Endothelial cell of umbilical vein (primary cell): ENCODE measurements at regions of chr9 and their contacts with region 1.

Region 1: GRCh38 chr9:3498691-3499090 is 27.1 kb downstream of the RFX3 start:
- DNase-seq: no peak
- H3K4me3 ChIP-seq: no peak overlapping the region
- H3K27ac ChIP-seq: no peak overlapping the region
- H3K4me1 ChIP-seq: peaks cover 22% of the 10 kb centered on the region
- H3K27me3 ChIP-seq: no peaks in the 10 kb centered on the region
- CTCF ChIP-seq: no peak
- POLR2A ChIP-seq: no peak

Region 2: GRCh38 chr9:3403315-3403714 is 95.4 kb before region 1 on chr9:
- CTCF ChIA-PET with region 1: no interaction called
- POLR2A ChIA-PET with region 1: no interaction called
- dilution Hi-C with region 1: no loop called
- intact Hi-C with region 1: no loop called
- DNase-seq: no peak
- H3K4me3 ChIP-seq: no peak overlapping the region
- H3K27ac ChIP-seq: no peak overlapping the region
- H3K4me1 ChIP-seq: no peaks in the 10 kb centered on the region
- H3K27me3 ChIP-seq: no peaks in the 10 kb centered on the region
- CTCF ChIP-seq: no peak
- POLR2A ChIP-seq: no peak

Region 3: GRCh38 chr9:3508521-3509291 is 10.0 kb after region 1 on chr9:
- CTCF ChIA-PET with region 1: interaction called, 12 read pairs
- POLR2A ChIA-PET with region 1: no interaction called
- dilution Hi-C with region 1: no loop called
- intact Hi-C with region 1: no loop called
- DNase-seq: peak; percentile 44
- H3K4me3 ChIP-seq: no peak overlapping the region
- H3K27ac ChIP-seq: no peak overlapping the region
- H3K4me1 ChIP-seq: peaks cover 6% of the 10 kb centered on the region
- H3K27me3 ChIP-seq: no peaks in the 10 kb centered on the region
- CTCF ChIP-seq: no peak
- POLR2A ChIP-seq: no peak

Region 4: DNA sequence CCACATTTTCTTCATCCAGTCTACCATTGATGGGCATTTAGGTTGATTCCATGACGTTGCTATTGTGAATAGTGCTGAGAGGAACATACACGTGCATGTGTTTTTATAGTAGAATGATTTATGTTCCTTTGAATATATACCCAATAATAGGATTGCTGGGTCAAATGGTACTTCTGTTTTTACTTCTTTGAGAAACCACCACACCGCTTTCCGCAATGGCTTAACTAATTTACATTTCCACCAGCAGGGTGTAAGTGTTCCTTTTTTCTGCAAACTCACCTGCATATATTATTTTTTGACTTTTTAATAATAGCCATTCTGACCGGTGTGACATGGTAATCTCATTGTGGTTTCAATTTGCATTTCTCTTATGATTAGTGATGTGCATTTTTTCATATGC is 109.3 kb after region 1 on chr9:
- CTCF ChIA-PET with region 1: no interaction called
- POLR2A ChIA-PET with region 1: no interaction called
- dilution Hi-C with region 1: no loop called
- intact Hi-C with region 1: no loop called
- DNase-seq: no peak
- H3K4me3 ChIP-seq: no peak overlapping the region
- H3K27ac ChIP-seq: no peak overlapping the region
- H3K4me1 ChIP-seq: no peaks in the 10 kb centered on the region
- H3K27me3 ChIP-seq: no peaks in the 10 kb centered on the region
- CTCF ChIP-seq: no peak
- POLR2A ChIP-seq: no peak